Posterior vena cava (tissue), 2 donors: ENCODE measurements at regions of chr17 and their contacts with region 1.

Region 1: DNA sequence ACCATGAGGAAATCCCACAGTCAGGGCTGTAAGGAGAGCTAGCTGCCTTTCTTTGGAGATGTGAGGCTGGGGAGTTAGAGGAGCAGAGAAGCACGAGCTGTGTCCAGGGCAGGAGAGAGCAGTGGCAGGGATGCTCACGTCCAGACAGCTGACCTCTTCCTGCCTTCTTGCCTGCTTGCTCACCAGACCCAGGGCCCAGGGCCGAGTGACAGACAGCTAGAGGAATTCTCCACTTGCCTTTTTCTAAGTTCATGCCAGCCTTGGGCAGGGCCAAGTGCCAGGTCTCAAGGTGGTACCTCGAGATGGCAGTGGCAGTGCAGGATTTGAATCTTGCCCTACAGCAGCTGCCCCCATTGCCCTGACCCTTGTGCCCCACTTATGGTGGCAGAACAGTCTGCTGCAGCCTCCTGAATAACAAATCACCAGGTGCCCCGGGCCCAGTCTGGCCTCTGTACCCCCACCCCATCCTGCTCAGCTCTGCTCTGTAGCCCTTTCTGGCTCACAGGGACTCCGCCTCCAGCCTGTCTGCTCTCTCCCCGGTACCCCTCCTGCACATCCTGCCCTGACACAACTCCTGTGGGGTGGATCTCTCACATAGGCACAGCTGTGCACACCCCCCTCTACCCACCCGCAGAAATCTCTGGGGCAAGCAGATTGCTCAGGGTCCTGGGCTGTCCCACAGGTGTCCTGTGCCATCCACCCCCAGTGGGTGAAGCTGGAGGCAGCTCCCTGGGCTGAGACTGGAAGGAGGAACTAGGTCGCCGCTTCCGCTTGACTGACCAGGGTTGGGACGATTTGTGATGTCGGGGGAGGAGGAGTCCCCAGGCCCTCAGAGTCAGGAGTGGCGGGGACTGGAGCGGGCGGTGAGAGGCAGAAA is 25.9 kb downstream of the GRIN2C start:
- DNase-seq: no peak

Region 2: DNA sequence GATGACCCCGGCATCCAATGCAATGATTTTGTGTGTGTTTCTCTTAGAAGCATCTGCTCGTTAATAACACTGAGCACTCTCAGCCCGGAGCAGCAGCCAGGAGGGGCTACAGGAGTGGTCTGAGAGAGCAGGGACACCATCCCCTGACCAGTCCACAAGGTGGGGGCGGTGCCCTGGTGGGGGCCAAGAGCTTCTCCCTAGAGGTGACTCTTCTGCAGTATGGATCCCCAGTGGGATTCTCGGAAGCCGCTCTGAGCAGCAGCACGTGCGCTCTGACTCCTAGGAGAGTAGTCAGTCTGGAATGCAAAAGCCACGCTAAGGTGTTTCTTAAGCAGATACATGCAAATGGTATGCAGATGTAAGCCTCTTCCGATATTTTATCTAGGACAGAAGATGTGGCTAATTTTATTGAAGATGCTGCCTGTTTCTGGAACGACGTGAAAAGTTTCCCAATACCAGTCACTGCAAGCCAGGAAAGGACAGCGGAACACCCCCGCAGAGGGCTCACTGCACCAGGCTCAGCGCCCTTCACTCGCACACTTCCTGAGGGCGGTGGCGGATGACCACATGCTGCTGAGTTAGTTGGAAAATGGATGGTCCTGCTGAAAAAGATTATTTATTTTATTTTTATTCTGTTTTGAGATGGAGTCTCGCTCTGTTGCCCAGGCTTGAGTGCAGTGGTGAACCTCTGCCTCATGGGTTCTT is 49.5 kb after region 1 on chr17:
- intact Hi-C with region 1: loop called in 1 of 2 experiments (anchors 1 kb)
- DNase-seq: no peak

Region 3: GRCh38 chr17:76805319-76805718 is 1971.6 kb after region 1 on chr17:
- intact Hi-C with region 1: no loop called
- DNase-seq: no peak